Caco-2 (cell line): ENCODE measurements at regions of chr5 and their contacts with region 1.

Region 1: GRCh38 chr5:76544268-76544926 is 78.8 kb downstream of the F2RL2 start:
- DNase-seq: peak; percentile 69 to 77
- H3K4me3 ChIP-seq: no peak overlapping the region
- H3K4me3 Mint-ChIP-seq: no peak overlapping the region
- H3K27ac Mint-ChIP-seq: peak overlapping the region; percentile 51
- H3K4me1 ChIP-seq: peaks cover 76% of the 10 kb centered on the region
- H3K4me1 Mint-ChIP-seq: peaks cover 35% of the 10 kb centered on the region
- H3K27me3 ChIP-seq: no peaks in the 10 kb centered on the region
- H3K27me3 Mint-ChIP-seq: no peaks in the 10 kb centered on the region
- CTCF ChIP-seq: peak; percentile 68 to 87

Region 2: GRCh38 chr5:76468635-76469425 is 75.6 kb before region 1 on chr5:
- CTCF ChIA-PET with region 1: no interaction called
- POLR2A ChIA-PET with region 1: no interaction called
- intact Hi-C with region 1: no loop called
- DNase-seq: no peak
- H3K4me3 ChIP-seq: no peak overlapping the region
- H3K4me3 Mint-ChIP-seq: no peak overlapping the region
- H3K27ac Mint-ChIP-seq: no peak overlapping the region
- H3K4me1 ChIP-seq: peaks cover 24% of the 10 kb centered on the region
- H3K4me1 Mint-ChIP-seq: peaks cover 16% of the 10 kb centered on the region
- H3K27me3 ChIP-seq: no peaks in the 10 kb centered on the region
- H3K27me3 Mint-ChIP-seq: no peaks in the 10 kb centered on the region
- CTCF ChIP-seq: no peak

Region 3: GRCh38 chr5:76479973-76480667 is 64.3 kb before region 1 on chr5:
- CTCF ChIA-PET with region 1: interaction called, 3 read pairs
- POLR2A ChIA-PET with region 1: no interaction called
- intact Hi-C with region 1: loop called (anchors 1 kb)
- DNase-seq: peak in 1 of 2 experiments; percentile 53
- H3K4me3 ChIP-seq: no peak overlapping the region
- H3K4me3 Mint-ChIP-seq: no peak overlapping the region
- H3K27ac Mint-ChIP-seq: peak overlapping the region; percentile 10
- H3K4me1 ChIP-seq: peaks cover 83% of the 10 kb centered on the region
- H3K4me1 Mint-ChIP-seq: peaks cover 45% of the 10 kb centered on the region
- H3K27me3 ChIP-seq: no peaks in the 10 kb centered on the region
- H3K27me3 Mint-ChIP-seq: no peaks in the 10 kb centered on the region
- CTCF ChIP-seq: no peak

Region 4: DNA sequence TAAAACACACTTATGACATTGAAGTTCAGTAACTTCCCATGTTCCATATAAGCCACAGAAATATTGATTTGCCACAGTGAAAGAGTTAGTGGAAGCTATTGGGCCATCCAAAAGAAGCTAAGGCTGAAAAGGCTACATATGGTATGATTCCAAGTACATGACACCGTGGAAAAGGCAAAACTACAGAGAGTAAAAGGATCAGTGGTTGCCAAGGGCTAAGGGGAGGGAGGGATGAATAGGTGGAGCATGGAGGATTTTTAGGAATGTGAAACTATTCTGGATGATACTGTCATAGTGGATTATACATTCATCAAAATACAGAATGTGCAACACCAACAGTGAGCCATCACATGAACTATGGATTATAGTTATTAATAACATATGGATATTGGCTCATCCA is 30.9 kb before region 1 on chr5:
- CTCF ChIA-PET with region 1: no interaction called
- POLR2A ChIA-PET with region 1: no interaction called
- intact Hi-C with region 1: no loop called
- DNase-seq: no peak
- H3K4me3 ChIP-seq: no peak overlapping the region
- H3K4me3 Mint-ChIP-seq: no peak overlapping the region
- H3K27ac Mint-ChIP-seq: no peak overlapping the region
- H3K4me1 ChIP-seq: peaks cover 63% of the 10 kb centered on the region
- H3K4me1 Mint-ChIP-seq: peaks cover 20% of the 10 kb centered on the region
- H3K27me3 ChIP-seq: no peaks in the 10 kb centered on the region
- H3K27me3 Mint-ChIP-seq: no peaks in the 10 kb centered on the region
- CTCF ChIP-seq: no peak

Region 5: DNA sequence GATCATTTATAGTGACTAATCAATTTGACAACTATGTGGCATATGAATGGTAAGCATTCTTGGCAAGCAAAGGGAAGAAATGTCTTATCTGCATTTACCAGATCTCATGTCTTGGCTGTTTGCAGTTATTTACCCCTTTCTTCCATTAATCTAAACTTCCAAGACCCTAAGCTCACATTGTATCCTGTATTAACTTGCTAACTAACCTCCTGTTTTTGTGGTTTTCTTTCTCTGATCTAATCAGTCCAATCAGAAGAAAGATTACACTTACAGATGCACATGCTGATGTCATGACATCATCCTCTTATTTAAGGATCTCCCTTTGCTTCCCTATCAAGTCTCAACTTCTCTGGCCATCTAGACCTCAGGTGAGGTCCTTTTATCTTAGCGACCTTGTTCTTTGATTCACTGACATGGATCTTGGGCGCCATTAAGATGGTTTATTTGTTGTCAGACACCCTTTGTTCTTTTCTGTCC is 16.7 kb before region 1 on chr5:
- CTCF ChIA-PET with region 1: no interaction called
- POLR2A ChIA-PET with region 1: no interaction called
- intact Hi-C with region 1: no loop called
- DNase-seq: peak; percentile 74 to 75
- H3K4me3 ChIP-seq: no peak overlapping the region
- H3K4me3 Mint-ChIP-seq: peak overlapping the region; percentile 7
- H3K27ac Mint-ChIP-seq: peak overlapping the region; percentile 77
- H3K4me1 ChIP-seq: peaks cover 88% of the 10 kb centered on the region
- H3K4me1 Mint-ChIP-seq: peaks cover 31% of the 10 kb centered on the region
- H3K27me3 ChIP-seq: no peaks in the 10 kb centered on the region
- H3K27me3 Mint-ChIP-seq: no peaks in the 10 kb centered on the region
- CTCF ChIP-seq: no peak

Region 6: GRCh38 chr5:77030097-77031071 is 486.0 kb after region 1 on chr5 and contains the start of gene AGGF1:
- CTCF ChIA-PET with region 1: no interaction called
- POLR2A ChIA-PET with region 1: no interaction called
- intact Hi-C with region 1: no loop called
- DNase-seq: peak; percentile 93 to 96
- H3K4me3 ChIP-seq: peak within 1 kb of the TSS; percentile 68
- H3K4me3 Mint-ChIP-seq: peak within 1 kb of the TSS; percentile 88
- H3K27ac Mint-ChIP-seq: peak within 1 kb of the TSS; percentile 78
- H3K4me1 ChIP-seq: 0 out of 2 replicates have a peak, but pooled peaks cover 9% of the 10 kb centered on the region
- H3K4me1 Mint-ChIP-seq: no peaks in the 10 kb centered on the region
- H3K27me3 ChIP-seq: no peaks in the 10 kb centered on the region
- H3K27me3 Mint-ChIP-seq: no peaks in the 10 kb centered on the region
- CTCF ChIP-seq: no peak
- total RNA-seq, gene AGGF1: 20.2 and 28.6 TPM in 2 replicates